ENCODE measurements at regions of chr17 and their contacts with region 1.

Region 1: GRCh38 chr17:17641621-17642409 is 39.4 kb upstream of the RAI1 start:
- DNase-seq: peak; percentile 74 to 92
- ATAC-seq: peak; percentile 87 to 98 (median 97)
- H3K4me3 ChIP-seq: no peak overlapping the region
- H3K4me3 Mint-ChIP-seq: no peak overlapping the region
- H3K27ac ChIP-seq: no peak overlapping the region
- H3K27ac Mint-ChIP-seq: no peak overlapping the region
- H3K4me1 ChIP-seq: peaks cover 13% of the 10 kb centered on the region
- H3K4me1 Mint-ChIP-seq: peaks cover 0 to 9% of the 10 kb centered on the region in 2 donors
- H3K27me3 ChIP-seq: no peaks in the 10 kb centered on the region
- H3K27me3 Mint-ChIP-seq: peaks cover 0 to 6% of the 10 kb centered on the region in 2 donors
- CTCF ChIP-seq: peak; percentile 78

Region 2: GRCh38 chr17:17433000-17433703 is 208.7 kb before region 1 on chr17:
- intact Hi-C with region 1: no loop called
- DNase-seq: no peak
- ATAC-seq: peak in 1 of 3 donors; percentile 54
- H3K4me3 ChIP-seq: no peak overlapping the region
- H3K4me3 Mint-ChIP-seq: no peak overlapping the region
- H3K27ac ChIP-seq: no peak overlapping the region
- H3K27ac Mint-ChIP-seq: no peak overlapping the region
- H3K4me1 ChIP-seq: no peaks in the 10 kb centered on the region
- H3K4me1 Mint-ChIP-seq: no peaks in the 10 kb centered on the region
- H3K27me3 ChIP-seq: no peaks in the 10 kb centered on the region
- H3K27me3 Mint-ChIP-seq: peaks cover 5 to 24% of the 10 kb centered on the region in 2 donors
- CTCF ChIP-seq: no peak

Region 3: GRCh38 chr17:17496189-17497064 is 145.4 kb before region 1 on chr17 and contains the start of gene RASD1:
- intact Hi-C with region 1: loop called (anchors 1 kb)
- DNase-seq: peak; percentile 79 to 88
- ATAC-seq: peak; percentile 87 to 92 (median 88)
- H3K4me3 ChIP-seq: peak within 1 kb of the TSS; percentile 50
- H3K4me3 Mint-ChIP-seq: peak within 1 kb of the TSS; percentile 92
- H3K27ac ChIP-seq: peak within 1 kb of the TSS; percentile 3
- H3K27ac Mint-ChIP-seq: peak within 1 kb of the TSS in 1 of 2 donors; percentile 48
- H3K4me1 ChIP-seq: peaks cover 19% of the 10 kb centered on the region
- H3K4me1 Mint-ChIP-seq: peaks cover 6 to 16% of the 10 kb centered on the region in 2 donors
- H3K27me3 ChIP-seq: peaks cover 6% of the 10 kb centered on the region
- H3K27me3 Mint-ChIP-seq: peaks cover 5 to 8% of the 10 kb centered on the region in 2 donors
- CTCF ChIP-seq: peak; percentile 99
- total RNA-seq, gene RASD1: 0.60 to 2.4 (median 1.2) TPM

Region 4: GRCh38 chr17:18087610-18088491 is 446.0 kb after region 1 on chr17 and contains the start of gene DRG2:
- intact Hi-C with region 1: loop called (anchors 5 kb)
- DNase-seq: peak; percentile 88 to 94
- ATAC-seq: peak; percentile 95 to 97 (median 97)
- H3K4me3 ChIP-seq: peak within 1 kb of the TSS; percentile 84
- H3K4me3 Mint-ChIP-seq: peak within 1 kb of the TSS; percentile 100
- H3K27ac ChIP-seq: peak within 1 kb of the TSS; percentile 80
- H3K27ac Mint-ChIP-seq: peak within 1 kb of the TSS; percentile 97 to 98
- H3K4me1 ChIP-seq: peaks cover 20% of the 10 kb centered on the region
- H3K4me1 Mint-ChIP-seq: peaks cover 28 to 33% of the 10 kb centered on the region in 2 donors
- H3K27me3 ChIP-seq: no peaks in the 10 kb centered on the region
- H3K27me3 Mint-ChIP-seq: no peaks in the 10 kb centered on the region
- CTCF ChIP-seq: no peak
- total RNA-seq, gene DRG2: 53.3 to 69.2 (median 62.7) TPM